Lower leg skin (tissue), 4 donors: ENCODE measurements at regions of chr17 and their contacts with region 1.

Region 1: DNA sequence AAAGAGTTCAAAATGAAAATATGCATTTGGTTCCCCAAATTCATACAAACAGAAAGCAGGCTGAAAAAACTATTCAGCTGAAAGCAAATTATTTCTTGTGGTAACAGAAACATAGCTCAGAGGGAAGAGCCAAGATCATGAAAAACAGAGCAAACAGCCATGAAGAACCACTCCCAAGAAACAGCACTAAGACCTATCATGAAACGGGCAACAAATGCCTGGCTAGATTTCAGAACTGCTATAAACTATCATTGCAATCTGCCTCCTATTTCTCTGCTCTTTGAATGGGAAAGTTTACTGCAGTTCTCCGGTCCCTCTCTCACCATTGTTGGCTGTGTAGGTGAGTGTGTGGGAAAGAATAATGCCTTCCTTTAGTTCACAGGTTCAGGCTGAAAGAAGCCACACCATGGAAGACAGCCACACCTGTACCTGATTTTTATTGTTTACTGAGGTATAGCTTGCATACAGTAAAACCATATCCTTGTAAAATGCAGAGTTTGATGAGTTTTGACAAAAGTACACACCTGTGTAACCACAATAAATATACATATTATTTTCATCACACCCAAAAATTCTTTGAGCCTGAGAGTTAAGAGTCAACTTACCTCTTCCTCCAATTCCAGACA is 48.2 kb downstream of the CEP112 start:
- DNase-seq: no peak
- H3K4me3 ChIP-seq: no peak overlapping the region
- CTCF ChIP-seq: no peak
- POLR2A ChIP-seq: no peak

Region 2: DNA sequence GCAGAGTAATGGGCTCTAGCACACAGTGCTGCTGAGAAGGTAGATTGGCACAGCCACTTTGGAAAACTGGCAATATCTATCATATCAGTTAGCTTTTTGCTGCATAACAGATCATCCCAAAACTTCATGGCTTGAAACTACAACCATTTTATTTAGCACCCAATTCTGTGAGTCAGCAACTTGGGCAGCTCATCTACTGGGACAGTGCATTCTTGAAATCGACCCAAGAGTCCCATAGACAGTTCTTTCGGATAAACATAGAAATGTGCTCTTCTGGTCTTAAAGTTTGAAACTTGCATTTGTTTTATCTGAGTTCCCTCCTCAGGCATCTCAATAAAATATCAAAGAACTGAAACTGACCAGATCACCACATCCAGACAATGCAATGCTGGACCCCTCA is 28.5 kb before region 1 on chr17:
- intact Hi-C with region 1: loop called (anchors 1 kb)
- DNase-seq: no peak
- H3K4me3 ChIP-seq: no peak overlapping the region
- CTCF ChIP-seq: no peak
- POLR2A ChIP-seq: no peak